G401 (cell line): ENCODE measurements at regions of chr6 and their contacts with region 1.

Region 1: DNA sequence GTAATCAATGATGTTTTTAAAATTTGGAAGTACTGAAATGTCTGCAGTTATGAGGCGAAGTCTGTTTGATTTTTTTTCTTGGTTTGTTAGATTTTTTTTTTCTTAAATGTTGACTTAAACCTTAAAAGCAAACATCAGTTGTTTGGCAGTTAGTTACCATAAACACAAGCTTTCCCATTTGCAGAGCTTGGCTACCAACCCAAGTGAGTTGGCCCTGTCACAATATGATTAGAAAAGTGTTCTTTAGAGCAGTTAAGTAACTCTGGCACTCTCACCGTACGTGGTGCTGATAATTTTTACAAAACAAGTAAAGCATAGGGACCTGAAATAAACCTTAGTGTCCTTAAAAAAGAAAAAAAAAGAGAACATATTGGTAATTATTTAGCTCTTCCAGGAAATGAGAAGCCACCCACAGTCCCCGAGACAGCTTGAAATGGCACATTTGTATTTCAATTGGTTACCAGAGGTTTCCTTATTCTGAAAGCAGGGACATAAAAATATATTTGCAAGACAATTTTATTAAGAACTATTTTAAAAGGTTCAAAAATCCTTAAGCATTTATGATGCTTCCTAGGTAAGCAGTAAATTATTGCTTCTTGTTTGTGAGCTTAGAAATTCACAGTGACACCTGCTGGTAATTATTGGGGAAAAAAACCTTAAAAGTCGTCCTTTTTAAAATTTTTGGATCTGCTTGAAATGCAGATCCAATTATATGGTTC is 3.9 kb downstream of the HEY2 start:
- DNase-seq: peak; percentile 55

Region 2: DNA sequence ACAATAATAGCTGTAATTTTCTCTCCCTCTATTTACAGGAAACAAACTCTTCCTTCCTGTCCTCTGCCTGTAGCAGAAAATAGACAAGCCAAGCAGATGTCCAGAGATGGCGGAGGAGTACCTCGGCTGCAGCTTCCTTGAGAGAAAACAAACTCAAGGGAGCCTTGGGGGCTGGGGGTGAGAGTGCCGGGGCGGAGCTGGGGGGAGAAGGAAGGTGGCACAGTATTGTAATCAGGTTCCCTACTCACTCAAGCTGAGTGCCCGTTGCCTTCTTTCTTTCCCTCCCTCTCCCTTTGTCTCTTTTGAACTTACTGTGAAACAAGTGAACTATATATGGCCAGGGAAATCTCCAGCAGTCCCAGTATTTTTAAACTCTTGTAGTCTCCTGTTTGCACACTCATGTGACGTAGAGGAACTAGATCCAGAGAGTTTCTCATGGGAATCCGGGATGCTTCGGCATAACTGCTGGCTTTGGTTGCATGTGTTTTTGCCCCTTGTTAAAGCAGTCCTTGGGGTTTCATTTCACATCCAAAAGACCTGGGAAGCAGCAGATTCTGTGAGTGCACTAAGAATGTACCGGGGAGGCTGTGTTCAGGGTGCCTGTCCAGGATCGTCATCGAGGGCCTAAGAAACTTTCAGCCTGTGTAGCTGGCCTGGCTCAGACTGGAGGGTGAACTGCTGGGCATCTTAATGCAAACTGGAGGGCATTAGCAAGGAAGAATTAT is 407.0 kb before region 1 on chr6:
- in situ Hi-C with region 1: loop called (anchors 25 kb)
- DNase-seq: no peak

Region 3: DNA sequence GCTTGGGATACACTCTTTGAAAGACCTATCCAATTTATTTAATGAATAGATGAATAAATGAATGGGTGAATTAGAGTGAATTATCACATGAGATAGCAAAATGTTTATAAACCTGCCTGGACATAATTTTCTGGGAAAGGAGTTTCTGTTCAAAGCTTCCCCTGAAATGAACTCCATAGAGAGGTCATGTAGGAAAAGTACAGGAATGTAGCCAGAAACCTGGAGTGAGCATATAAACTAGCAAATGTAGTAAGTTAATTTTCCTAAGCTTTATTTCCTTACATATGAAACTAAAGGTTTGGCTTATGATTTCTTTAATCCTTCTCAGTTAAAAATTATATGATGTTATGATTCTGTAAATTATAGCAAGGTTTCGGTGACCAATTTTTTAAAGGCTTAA is 984.8 kb after region 1 on chr6:
- in situ Hi-C with region 1: no loop called
- DNase-seq: no peak